ENCODE measurements at regions of chr21 and their contacts with region 1.

Region 1: GRCh38 chr21:45140346-45140940 is 66.1 kb downstream of the ADARB1 start:
- DNase-seq: peak; percentile 88
- H3K4me3 ChIP-seq: no peak overlapping the region
- H3K27ac ChIP-seq: no peak overlapping the region
- H3K4me1 ChIP-seq: no peaks in the 10 kb centered on the region
- H3K27me3 ChIP-seq: no peaks in the 10 kb centered on the region
- CTCF ChIP-seq: peak; percentile 90 to 93
- POLR2A ChIP-seq: no peak

Region 2: GRCh38 chr21:44949779-44950198 is 190.7 kb before region 1 on chr21:
- CTCF ChIA-PET with region 1: interaction called, 330 read pairs
- POLR2A ChIA-PET with region 1: no interaction called
- dilution Hi-C with region 1: loop called (anchors 25 kb)
- intact Hi-C with region 1: loop called (anchors 1 kb)
- DNase-seq: peak; percentile 54
- H3K4me3 ChIP-seq: no peak overlapping the region
- H3K27ac ChIP-seq: no peak overlapping the region
- H3K4me1 ChIP-seq: peaks cover 3% of the 10 kb centered on the region
- H3K27me3 ChIP-seq: no peaks in the 10 kb centered on the region
- CTCF ChIP-seq: peak; percentile 88 to 89
- POLR2A ChIP-seq: no peak

Region 3: DNA sequence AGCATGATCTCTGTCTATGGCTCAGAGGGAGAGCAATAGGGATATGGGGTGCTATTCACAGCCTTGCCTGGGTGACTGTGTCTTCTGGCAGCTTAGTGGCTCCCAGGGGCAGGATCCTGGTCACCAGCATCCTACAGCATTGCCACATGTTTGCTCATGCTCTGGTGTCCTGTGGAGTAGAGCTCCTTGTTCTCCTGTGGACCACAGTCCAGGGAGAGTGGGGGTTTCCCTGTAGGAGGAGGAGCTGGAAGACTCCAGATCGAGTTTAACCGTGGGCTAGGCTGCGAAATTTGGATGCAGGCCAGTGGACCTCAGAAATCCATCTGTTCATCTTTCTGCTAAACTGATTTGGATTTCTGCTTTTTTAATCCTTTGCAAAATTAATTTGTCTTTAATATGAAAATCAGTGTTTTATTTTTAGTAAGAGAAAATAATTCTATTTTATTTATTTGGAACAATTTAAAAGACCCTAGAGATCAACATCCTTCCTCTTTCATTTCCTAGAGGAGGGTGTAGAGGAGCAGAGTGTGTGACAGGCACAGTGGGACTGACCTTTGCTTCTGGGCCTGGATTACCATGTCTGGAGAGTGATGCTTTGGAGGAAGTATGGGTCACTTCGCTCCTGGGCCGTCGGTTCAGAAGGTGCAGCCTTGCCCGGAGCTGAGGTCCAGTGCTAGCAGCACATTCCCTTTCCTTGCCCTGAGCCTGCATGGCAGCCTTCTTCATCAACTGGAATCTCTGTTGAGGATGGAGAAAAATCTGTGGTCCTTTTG is 48.7 kb before region 1 on chr21:
- CTCF ChIA-PET with region 1: interaction called, 16 read pairs
- POLR2A ChIA-PET with region 1: no interaction called
- dilution Hi-C with region 1: no loop called
- intact Hi-C with region 1: no loop called
- DNase-seq: no peak
- H3K4me3 ChIP-seq: no peak overlapping the region
- H3K27ac ChIP-seq: no peak overlapping the region
- H3K4me1 ChIP-seq: peaks cover 55% of the 10 kb centered on the region
- H3K27me3 ChIP-seq: no peaks in the 10 kb centered on the region
- CTCF ChIP-seq: no peak
- POLR2A ChIP-seq: no peak

Region 4: DNA sequence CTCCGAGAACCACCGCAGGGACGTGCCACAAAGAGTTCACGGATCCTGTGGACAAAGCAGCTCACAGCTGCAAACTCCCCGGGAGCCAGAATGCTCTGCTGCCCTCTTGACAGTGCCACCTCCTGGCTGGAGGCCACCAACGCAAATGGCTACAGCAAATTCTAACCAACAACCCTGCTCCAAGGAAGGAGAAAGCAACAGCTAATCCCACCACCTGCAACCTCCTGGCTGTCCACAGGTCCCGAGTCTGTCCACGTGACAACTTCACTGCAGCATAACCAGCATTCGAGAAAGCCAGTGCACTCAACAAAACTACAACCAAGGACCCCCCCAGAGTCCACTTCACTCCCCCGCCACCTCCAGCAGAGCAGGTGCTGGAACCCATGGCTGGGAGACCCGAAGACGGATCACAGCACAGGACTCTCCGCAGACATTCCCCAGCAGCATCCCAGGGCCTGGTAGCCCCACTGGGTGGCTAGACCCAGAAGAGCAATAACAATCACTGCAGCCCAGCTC is 129.9 kb after region 1 on chr21:
- CTCF ChIA-PET with region 1: interaction called, 21 read pairs
- POLR2A ChIA-PET with region 1: no interaction called
- dilution Hi-C with region 1: no loop called
- intact Hi-C with region 1: no loop called
- DNase-seq: no peak
- H3K4me3 ChIP-seq: no peak overlapping the region
- H3K27ac ChIP-seq: no peak overlapping the region
- H3K4me1 ChIP-seq: no peaks in the 10 kb centered on the region
- H3K27me3 ChIP-seq: no peaks in the 10 kb centered on the region
- CTCF ChIP-seq: peak in 1 of 2 donors; percentile 23
- POLR2A ChIP-seq: no peak

Region 5: GRCh38 chr21:45439161-45439872 is 298.9 kb after region 1 on chr21:
- CTCF ChIA-PET with region 1: interaction called, 10 read pairs
- POLR2A ChIA-PET with region 1: no interaction called
- dilution Hi-C with region 1: no loop called
- intact Hi-C with region 1: loop called (anchors 1 kb)
- DNase-seq: peak; percentile 91
- H3K4me3 ChIP-seq: peak overlapping the region in 2 of 3 experiments; percentile 7 to 26
- H3K27ac ChIP-seq: peak overlapping the region; percentile 82
- H3K4me1 ChIP-seq: peaks cover 15% of the 10 kb centered on the region
- H3K27me3 ChIP-seq: no peaks in the 10 kb centered on the region
- CTCF ChIP-seq: peak; percentile 94 to 96
- POLR2A ChIP-seq: no peak

Measured in endothelial cell of umbilical vein (primary cell).